Activated B cell treated with CpG ODN at 0.5 μM for 24 hours (primary cell): ENCODE measurements at regions of chr14 and their contacts with region 1.

Region 1: DNA sequence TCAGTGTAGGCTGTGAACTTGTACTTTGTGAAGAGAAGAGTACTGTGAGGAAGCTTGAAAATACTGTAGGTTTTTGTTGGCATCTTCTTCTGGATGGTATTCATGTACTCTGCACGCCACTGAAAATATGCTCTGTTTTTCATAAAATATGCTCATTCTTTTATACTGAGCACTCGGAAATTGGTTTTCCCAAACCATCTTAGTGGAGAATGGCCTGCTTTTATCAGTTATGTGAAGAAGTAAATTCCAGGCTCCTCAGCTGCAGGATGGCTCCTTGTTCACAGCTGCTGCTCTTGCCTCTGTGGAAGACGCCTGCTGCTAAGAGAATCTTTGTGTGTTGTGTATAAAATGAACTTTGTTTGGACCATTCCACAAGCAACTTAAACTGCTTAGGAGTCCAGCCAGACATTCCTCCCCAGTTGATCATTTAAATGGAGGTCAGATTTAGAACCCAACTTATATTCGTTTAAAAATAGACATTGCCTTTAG is 443.5 kb upstream of the RGS6 start:
- DNase-seq: no peak
- ATAC-seq: no peak
- H3K4me3 Mint-ChIP-seq: no peak overlapping the region
- H3K27ac Mint-ChIP-seq: no peak overlapping the region
- H3K4me1 Mint-ChIP-seq: peaks cover 16% of the 10 kb centered on the region
- H3K27me3 Mint-ChIP-seq: no peaks in the 10 kb centered on the region
- CTCF ChIP-seq: no peak

Region 2: GRCh38 chr14:71228711-71229110 is 260.0 kb before region 1 on chr14:
- CTCF ChIA-PET with region 1: no interaction called
- POLR2A ChIA-PET with region 1: no interaction called
- intact Hi-C with region 1: no loop called
- DNase-seq: no peak
- ATAC-seq: no peak
- H3K4me3 Mint-ChIP-seq: no peak overlapping the region
- H3K27ac Mint-ChIP-seq: no peak overlapping the region
- H3K4me1 Mint-ChIP-seq: peaks cover 10% of the 10 kb centered on the region
- H3K27me3 Mint-ChIP-seq: no peaks in the 10 kb centered on the region
- CTCF ChIP-seq: no peak

Region 3: DNA sequence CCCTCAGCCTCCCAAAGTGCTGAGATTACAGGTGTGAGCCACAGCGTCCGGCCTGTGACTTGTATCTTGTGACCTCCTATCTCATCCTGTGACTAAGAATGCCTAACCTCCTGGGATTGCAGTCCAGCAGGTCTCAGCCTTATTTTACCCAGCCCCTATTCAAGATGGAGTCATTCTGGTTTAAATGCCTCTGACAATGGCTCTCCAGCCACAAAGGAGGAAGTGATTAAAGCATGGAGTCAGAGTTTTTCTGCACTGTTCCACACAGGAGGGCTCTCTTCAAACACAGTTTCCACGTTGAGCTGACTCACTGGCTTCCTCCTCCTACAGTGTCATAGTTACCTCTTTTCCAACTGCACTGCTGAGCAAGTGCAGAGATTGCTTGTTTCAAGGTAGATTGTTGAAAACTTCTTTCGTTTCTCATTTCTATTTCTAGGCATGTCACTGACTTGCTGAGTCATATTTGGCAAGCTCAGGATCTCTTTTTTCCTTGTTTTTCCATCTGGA is 197.7 kb before region 1 on chr14:
- CTCF ChIA-PET with region 1: no interaction called
- POLR2A ChIA-PET with region 1: no interaction called
- intact Hi-C with region 1: no loop called
- DNase-seq: no peak
- ATAC-seq: peak; percentile 77
- H3K4me3 Mint-ChIP-seq: no peak overlapping the region
- H3K27ac Mint-ChIP-seq: no peak overlapping the region
- H3K4me1 Mint-ChIP-seq: peaks cover 15% of the 10 kb centered on the region
- H3K27me3 Mint-ChIP-seq: peaks cover 3% of the 10 kb centered on the region
- CTCF ChIP-seq: no peak

Region 4: GRCh38 chr14:71441126-71441525 is 47.6 kb before region 1 on chr14:
- CTCF ChIA-PET with region 1: no interaction called
- POLR2A ChIA-PET with region 1: no interaction called
- intact Hi-C with region 1: loop called (anchors 5 kb)
- DNase-seq: no peak
- ATAC-seq: no peak
- H3K4me3 Mint-ChIP-seq: no peak overlapping the region
- H3K27ac Mint-ChIP-seq: no peak overlapping the region
- H3K4me1 Mint-ChIP-seq: peaks cover 41% of the 10 kb centered on the region
- H3K27me3 Mint-ChIP-seq: no peaks in the 10 kb centered on the region
- CTCF ChIP-seq: no peak

Region 5: DNA sequence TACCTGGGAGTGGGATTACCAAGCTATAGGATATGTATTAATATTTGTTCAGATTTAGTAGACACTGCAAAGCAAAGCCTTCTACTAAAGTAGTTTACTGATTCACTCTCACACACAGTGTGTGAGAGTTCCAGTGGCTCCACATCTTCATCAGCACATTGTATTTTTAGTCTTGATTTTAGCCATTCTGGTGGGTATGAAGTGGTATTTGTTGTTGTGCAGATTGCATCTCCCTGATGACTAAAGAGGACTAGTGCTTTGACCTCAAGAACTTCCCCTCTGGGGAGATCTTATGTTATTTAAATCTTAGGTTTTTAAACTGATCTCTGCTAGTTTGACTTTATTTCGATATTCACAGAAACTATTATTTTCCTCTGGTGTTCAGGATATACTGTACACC is 36.2 kb before region 1 on chr14:
- CTCF ChIA-PET with region 1: no interaction called
- POLR2A ChIA-PET with region 1: no interaction called
- intact Hi-C with region 1: no loop called
- DNase-seq: no peak
- ATAC-seq: no peak
- H3K4me3 Mint-ChIP-seq: no peak overlapping the region
- H3K27ac Mint-ChIP-seq: no peak overlapping the region
- H3K4me1 Mint-ChIP-seq: peaks cover 19% of the 10 kb centered on the region
- H3K27me3 Mint-ChIP-seq: no peaks in the 10 kb centered on the region
- CTCF ChIP-seq: no peak

Region 6: GRCh38 chr14:71478542-71478941 is 10.2 kb before region 1 on chr14:
- CTCF ChIA-PET with region 1: no interaction called
- POLR2A ChIA-PET with region 1: no interaction called
- intact Hi-C with region 1: no loop called
- DNase-seq: no peak
- ATAC-seq: peak; percentile 14
- H3K4me3 Mint-ChIP-seq: no peak overlapping the region
- H3K27ac Mint-ChIP-seq: peak overlapping the region; percentile 36
- H3K4me1 Mint-ChIP-seq: peaks cover 48% of the 10 kb centered on the region
- H3K27me3 Mint-ChIP-seq: no peaks in the 10 kb centered on the region
- CTCF ChIP-seq: no peak